Naive thymus-derived CD4-positive, alpha-beta T cell (primary cell): ENCODE measurements at regions of chr20 and their contacts with region 1.

Region 1: DNA sequence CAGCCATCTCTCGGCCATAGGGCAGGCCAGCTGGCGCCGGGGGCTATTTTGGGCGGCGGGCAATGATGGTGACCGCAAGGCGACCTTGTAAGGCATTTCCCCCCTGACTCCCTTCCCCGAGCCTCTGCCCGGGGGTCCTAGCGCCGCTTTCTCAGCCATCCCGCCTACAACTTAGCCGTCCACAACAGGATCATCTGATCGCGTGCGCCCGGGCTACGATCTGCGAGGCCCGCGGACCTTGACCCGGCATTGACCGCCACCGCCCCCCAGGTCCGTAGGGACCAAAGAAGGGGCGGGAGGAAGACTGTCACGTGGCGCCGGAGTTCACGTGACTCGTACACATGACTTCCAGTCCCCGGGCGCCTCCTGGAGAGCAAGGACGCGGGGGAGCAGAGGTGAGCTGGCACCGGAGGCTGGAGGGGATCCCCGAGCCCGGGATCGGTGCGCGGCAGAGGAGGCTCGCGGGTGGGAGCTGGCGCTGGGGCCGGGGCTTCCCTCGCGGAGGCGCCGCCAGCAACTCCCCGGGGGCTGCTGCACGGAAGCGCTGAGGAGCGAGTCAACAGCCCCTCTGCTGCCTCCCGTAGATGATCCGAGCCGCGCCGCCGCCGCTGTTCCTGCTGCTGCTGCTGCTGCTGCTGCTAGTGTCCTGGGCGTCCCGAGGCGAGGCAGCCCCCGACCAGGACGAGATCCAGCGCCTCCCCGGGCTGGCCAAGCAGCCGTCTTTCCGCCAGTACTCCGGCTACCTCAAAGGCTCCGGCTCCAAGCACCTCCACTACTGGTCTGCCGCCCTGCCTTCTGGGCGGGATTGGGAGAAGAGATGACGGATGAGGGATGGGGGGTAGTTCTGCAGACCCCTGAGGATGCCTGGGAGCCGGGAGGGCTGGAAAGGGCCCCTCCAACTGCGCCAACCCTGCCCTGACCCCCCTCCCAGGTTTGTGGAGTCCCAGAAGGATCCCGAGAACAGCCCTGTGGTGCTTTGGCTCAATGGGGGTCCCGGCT is at the starts of genes CTSA and NEURL2:
- DNase-seq: peak; percentile 62 to 90 (median 83)
- ATAC-seq: peak; percentile 87
- H3K4me3 ChIP-seq: peak within 1 kb of the TSS; percentile 96
- H3K4me3 Mint-ChIP-seq: peak within 1 kb of the TSS; percentile 88 to 95 (median 93)
- H3K27ac ChIP-seq: peak within 1 kb of the TSS; percentile 76
- H3K27ac Mint-ChIP-seq: peak within 1 kb of the TSS; percentile 85 to 97 (median 90)
- H3K4me1 ChIP-seq: peaks cover 22 to 25% of the 10 kb centered on the region in 2 donors
- H3K4me1 Mint-ChIP-seq: peaks cover 17 to 37% (median 26%) of the 10 kb centered on the region in 7 donors
- H3K27me3 ChIP-seq: no peaks in the 10 kb centered on the region
- H3K27me3 Mint-ChIP-seq: no peaks in the 10 kb centered on the region
- total RNA-seq, gene CTSA: 60.5 to 151 (median 65.1) TPM
- total RNA-seq, gene NEURL2: 1.2 to 5.3 (median 4.0) TPM

Region 2: DNA sequence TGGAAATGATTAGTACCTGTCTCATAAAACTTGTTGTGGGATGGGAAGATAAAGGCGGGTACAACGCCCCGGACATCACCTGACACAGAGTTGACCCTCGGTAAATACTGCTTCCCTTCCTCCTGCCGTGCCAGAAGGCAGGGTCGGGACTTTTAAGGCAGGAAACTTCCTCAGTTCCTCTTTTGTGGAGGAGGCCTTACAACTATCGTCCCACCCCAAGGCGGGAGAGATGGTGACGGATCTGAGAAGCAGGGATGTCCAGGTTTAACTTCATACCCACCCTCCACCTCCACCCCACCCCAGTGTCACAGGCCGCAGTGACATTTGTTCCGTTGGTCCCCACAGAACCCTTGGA is 99.0 kb before region 1 on chr20:
- CTCF ChIA-PET with region 1: no interaction called
- POLR2A ChIA-PET with region 1: no interaction called
- intact Hi-C with region 1: loop called (anchors 1 to 5 kb)
- DNase-seq: peak in 1 of 9 donors; percentile 9
- ATAC-seq: peak; percentile 39
- H3K4me3 ChIP-seq: peak overlapping the region; percentile 70
- H3K4me3 Mint-ChIP-seq: peak overlapping the region; percentile 85 to 99 (median 92)
- H3K27ac ChIP-seq: peak overlapping the region; percentile 96
- H3K27ac Mint-ChIP-seq: peak overlapping the region; percentile 87 to 99 (median 93)
- H3K4me1 ChIP-seq: peaks cover 5 to 10% of the 10 kb centered on the region in 2 donors
- H3K4me1 Mint-ChIP-seq: peaks cover 13 to 28% (median 20%) of the 10 kb centered on the region in 7 donors
- H3K27me3 ChIP-seq: no peaks in the 10 kb centered on the region
- H3K27me3 Mint-ChIP-seq: peaks cover 0 to 5% (median 0%) of the 10 kb centered on the region in 5 donors

Region 3: GRCh38 chr20:45798935-45799642 is 92.2 kb before region 1 on chr20:
- CTCF ChIA-PET with region 1: interaction called, 4 read pairs
- POLR2A ChIA-PET with region 1: no interaction called
- intact Hi-C with region 1: loop called (anchors 1 to 5 kb)
- DNase-seq: peak; percentile 25 to 70 (median 58)
- ATAC-seq: peak; percentile 96
- H3K4me3 ChIP-seq: no peak overlapping the region
- H3K4me3 Mint-ChIP-seq: no peak overlapping the region
- H3K27ac ChIP-seq: peak overlapping the region; percentile 24
- H3K27ac Mint-ChIP-seq: peak overlapping the region in 8 of 9 donors; percentile 1 to 92 (median 52)
- H3K4me1 ChIP-seq: peaks cover 4 to 7% of the 10 kb centered on the region in 2 donors
- H3K4me1 Mint-ChIP-seq: peaks cover 9 to 21% (median 11%) of the 10 kb centered on the region in 7 donors
- H3K27me3 ChIP-seq: no peaks in the 10 kb centered on the region
- H3K27me3 Mint-ChIP-seq: no peaks in the 10 kb centered on the region

Region 4: GRCh38 chr20:45812157-45813020 is 78.9 kb before region 1 on chr20 and contains the start of gene UBE2C:
- CTCF ChIA-PET with region 1: no interaction called
- POLR2A ChIA-PET with region 1: no interaction called
- intact Hi-C with region 1: loop called (anchors 1 kb)
- DNase-seq: peak; percentile 73 to 95 (median 92)
- ATAC-seq: peak; percentile 100
- H3K4me3 ChIP-seq: peak within 1 kb of the TSS; percentile 52
- H3K4me3 Mint-ChIP-seq: peak within 1 kb of the TSS; percentile 79 to 96 (median 84)
- H3K27ac ChIP-seq: peak within 1 kb of the TSS; percentile 63
- H3K27ac Mint-ChIP-seq: peak within 1 kb of the TSS; percentile 36 to 87 (median 71)
- H3K4me1 ChIP-seq: peaks cover 0 to 12% of the 10 kb centered on the region in 2 donors
- H3K4me1 Mint-ChIP-seq: peaks cover 3 to 42% (median 16%) of the 10 kb centered on the region in 7 donors
- H3K27me3 ChIP-seq: no peaks in the 10 kb centered on the region
- H3K27me3 Mint-ChIP-seq: no peaks in the 10 kb centered on the region
- total RNA-seq, gene UBE2C: 0.50 to 129 (median 0.75) TPM in 4 of 5 experiments, not detected in the other

Region 5: DNA sequence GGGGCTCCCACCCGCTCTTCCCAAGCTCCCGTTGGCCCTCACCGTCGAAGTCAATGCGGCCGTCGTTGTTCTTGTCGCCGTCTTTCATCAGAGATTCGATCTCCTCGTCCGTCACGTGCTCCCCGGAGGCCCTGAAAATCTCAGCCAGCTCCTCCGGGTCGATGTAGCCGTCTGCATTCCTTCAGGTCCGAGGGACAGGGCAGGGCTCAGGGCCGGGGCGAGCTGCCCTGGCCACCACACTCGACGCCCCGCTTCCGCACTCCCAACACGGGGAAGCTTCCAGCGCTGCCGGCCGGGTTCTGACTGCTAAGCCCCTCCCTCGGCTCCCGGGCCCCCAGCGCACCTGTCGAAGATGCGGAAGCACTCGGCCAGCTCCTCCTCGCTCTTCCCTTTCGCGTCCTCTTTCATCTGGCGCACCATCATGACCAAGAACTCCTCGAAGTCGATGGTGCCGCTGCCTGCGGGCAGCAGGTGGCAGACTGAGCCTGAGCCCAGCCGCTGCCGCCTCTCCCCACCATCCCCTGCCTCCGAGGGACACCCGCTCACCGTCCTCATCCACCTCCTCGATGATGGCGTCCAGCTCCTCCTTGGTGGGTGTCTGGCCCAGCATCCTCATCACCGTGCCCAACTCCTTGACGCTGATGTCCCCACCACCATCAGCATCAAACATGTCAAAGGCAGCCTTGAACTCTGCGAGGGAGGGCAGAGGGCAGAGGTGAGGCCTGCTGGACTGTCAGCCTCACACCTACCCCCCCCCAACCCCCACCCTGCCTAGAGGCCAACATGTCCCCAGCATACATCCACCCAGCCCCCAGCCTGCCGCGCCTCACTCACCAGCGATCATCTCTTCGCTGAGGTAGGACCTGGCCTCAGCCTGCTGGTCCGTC is 67.1 kb before region 1 on chr20:
- CTCF ChIA-PET with region 1: no interaction called
- POLR2A ChIA-PET with region 1: interaction called, 3 read pairs
- intact Hi-C with region 1: loop called in 1 of 2 experiments (anchors 1 kb)
- DNase-seq: peak; percentile 23 to 48 (median 30)
- ATAC-seq: peak; percentile 70
- H3K4me3 ChIP-seq: peak overlapping the region; percentile 29
- H3K4me3 Mint-ChIP-seq: peak overlapping the region; percentile 75 to 88 (median 84)
- H3K27ac ChIP-seq: no peak overlapping the region
- H3K27ac Mint-ChIP-seq: peak overlapping the region in 5 of 9 donors; percentile 21 to 73 (median 51)
- H3K4me1 ChIP-seq: peaks cover 0 to 7% of the 10 kb centered on the region in 2 donors
- H3K4me1 Mint-ChIP-seq: peaks cover 12 to 26% (median 19%) of the 10 kb centered on the region in 7 donors
- H3K27me3 ChIP-seq: peaks cover 3 to 10% of the 10 kb centered on the region in 2 donors
- H3K27me3 Mint-ChIP-seq: peaks cover 22 to 40% (median 33%) of the 10 kb centered on the region in 5 donors

Region 6: GRCh38 chr20:45880988-45881788 is 10.1 kb before region 1 on chr20 and contains the start of gene ZSWIM1:
- CTCF ChIA-PET with region 1: interaction called, 9 read pairs
- POLR2A ChIA-PET with region 1: interaction called, 64 read pairs
- intact Hi-C with region 1: loop called (anchors 1 kb)
- DNase-seq: peak; percentile 88 to 99 (median 98)
- ATAC-seq: peak; percentile 99
- H3K4me3 ChIP-seq: peak within 1 kb of the TSS; percentile 75
- H3K4me3 Mint-ChIP-seq: peak within 1 kb of the TSS; percentile 83 to 95 (median 92)
- H3K27ac ChIP-seq: peak within 1 kb of the TSS; percentile 95
- H3K27ac Mint-ChIP-seq: peak within 1 kb of the TSS; percentile 91 to 95 (median 93)
- H3K4me1 ChIP-seq: peaks cover 9 to 18% of the 10 kb centered on the region in 2 donors
- H3K4me1 Mint-ChIP-seq: peaks cover 26 to 43% (median 38%) of the 10 kb centered on the region in 7 donors
- H3K27me3 ChIP-seq: no peaks in the 10 kb centered on the region
- H3K27me3 Mint-ChIP-seq: no peaks in the 10 kb centered on the region
- total RNA-seq, gene ZSWIM1: 8.2 to 16.0 (median 9.8) TPM

Region 7: DNA sequence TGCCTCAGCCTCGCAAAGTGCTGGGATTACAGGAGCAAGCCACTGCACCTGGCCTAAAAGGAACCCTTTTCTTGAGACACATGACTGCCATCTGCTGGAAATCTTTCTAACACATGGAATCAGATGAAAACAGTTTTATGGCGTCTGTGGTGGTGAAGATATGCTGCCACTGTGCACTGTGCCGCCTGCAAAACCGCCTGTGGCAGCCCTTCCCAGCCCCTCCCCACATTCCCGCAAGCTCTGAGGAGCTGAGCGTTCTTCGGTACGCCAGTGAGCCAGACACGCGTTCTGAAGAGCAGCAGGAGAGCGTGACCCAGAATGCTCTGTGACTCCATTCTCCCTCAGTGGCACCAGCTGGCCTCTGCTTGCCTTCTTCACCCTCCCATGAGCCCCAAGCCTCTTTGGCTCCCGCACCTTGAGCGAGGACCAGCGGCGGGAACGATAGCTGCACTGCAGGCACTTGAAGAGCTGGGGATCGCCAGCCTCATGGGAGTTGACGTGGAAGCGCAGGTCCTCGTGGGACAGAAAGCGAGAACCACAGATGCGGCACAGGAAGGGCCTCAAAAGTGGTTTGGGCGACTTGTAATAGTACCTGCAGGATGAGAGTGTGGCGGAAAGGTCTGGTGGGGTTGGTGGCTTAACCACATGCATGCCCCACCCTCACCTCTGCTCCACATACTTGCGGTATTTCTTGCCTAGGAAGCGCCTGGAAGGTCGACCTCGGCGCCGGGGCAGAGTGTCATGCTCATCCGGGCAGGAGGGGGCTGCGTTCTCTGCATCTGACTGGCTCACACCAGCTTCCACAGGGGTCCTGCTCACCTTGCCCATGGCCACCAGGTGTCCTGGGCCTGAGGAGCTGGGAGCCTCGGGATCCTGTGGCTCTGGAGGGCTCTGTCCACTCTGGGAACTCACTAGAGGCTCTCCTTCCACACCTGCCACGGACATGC is 72.0 kb after region 1 on chr20:
- CTCF ChIA-PET with region 1: interaction called, 3 read pairs
- POLR2A ChIA-PET with region 1: interaction called, 4 read pairs
- intact Hi-C with region 1: loop called in 1 of 2 experiments (anchors 2 kb)
- DNase-seq: peak in 5 of 9 donors; percentile 23 to 42 (median 31)
- ATAC-seq: peak; percentile 50
- H3K4me3 ChIP-seq: no peak overlapping the region
- H3K4me3 Mint-ChIP-seq: no peak overlapping the region
- H3K27ac ChIP-seq: no peak overlapping the region
- H3K27ac Mint-ChIP-seq: peak overlapping the region in 4 of 9 donors; percentile 20 to 76 (median 50)
- H3K4me1 ChIP-seq: no peaks in the 10 kb centered on the region
- H3K4me1 Mint-ChIP-seq: peaks cover 0 to 3% (median 0%) of the 10 kb centered on the region in 7 donors
- H3K27me3 ChIP-seq: no peaks in the 10 kb centered on the region
- H3K27me3 Mint-ChIP-seq: no peaks in the 10 kb centered on the region

Region 8: DNA sequence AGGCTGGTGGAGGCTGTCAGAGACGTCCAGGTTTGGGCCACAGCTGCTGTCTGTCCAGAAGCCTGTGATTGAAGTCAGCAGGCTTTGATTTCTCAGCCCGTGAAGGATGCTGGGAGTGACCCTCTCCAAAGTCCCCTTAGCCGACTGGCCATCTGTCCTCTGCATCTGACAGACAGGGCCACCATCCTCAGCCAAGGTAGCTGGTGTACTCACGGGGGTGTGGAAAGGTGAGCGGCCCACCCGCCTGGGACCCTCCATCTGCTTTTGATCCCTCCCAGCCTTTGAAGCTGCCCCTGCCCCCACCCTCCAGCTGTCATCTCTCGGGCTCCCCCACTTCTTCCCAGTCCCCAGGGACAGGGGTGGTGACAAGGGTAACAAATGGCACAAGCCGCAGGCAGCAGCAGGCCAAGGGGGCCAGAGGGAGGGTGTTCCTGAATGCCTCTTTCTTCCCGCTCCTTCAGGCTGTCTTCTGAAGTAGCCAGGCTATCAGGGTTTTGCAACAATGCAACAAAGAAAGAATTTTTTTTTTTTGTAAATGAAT is 1087.7 kb after region 1 on chr20:
- CTCF ChIA-PET with region 1: no interaction called
- POLR2A ChIA-PET with region 1: no interaction called
- intact Hi-C with region 1: no loop called
- DNase-seq: no peak
- ATAC-seq: no peak
- H3K4me3 ChIP-seq: no peak overlapping the region
- H3K4me3 Mint-ChIP-seq: no peak overlapping the region
- H3K27ac ChIP-seq: no peak overlapping the region
- H3K27ac Mint-ChIP-seq: no peak overlapping the region
- H3K4me1 ChIP-seq: no peaks in the 10 kb centered on the region
- H3K4me1 Mint-ChIP-seq: peaks cover 0 to 26% (median 0%) of the 10 kb centered on the region in 7 donors
- H3K27me3 ChIP-seq: no peaks in the 10 kb centered on the region
- H3K27me3 Mint-ChIP-seq: peaks cover 17 to 66% (median 44%) of the 10 kb centered on the region in 5 donors